Vagina (tissue), 2 donors: ENCODE measurements at regions of chr14 and their contacts with region 1.

Region 1: DNA sequence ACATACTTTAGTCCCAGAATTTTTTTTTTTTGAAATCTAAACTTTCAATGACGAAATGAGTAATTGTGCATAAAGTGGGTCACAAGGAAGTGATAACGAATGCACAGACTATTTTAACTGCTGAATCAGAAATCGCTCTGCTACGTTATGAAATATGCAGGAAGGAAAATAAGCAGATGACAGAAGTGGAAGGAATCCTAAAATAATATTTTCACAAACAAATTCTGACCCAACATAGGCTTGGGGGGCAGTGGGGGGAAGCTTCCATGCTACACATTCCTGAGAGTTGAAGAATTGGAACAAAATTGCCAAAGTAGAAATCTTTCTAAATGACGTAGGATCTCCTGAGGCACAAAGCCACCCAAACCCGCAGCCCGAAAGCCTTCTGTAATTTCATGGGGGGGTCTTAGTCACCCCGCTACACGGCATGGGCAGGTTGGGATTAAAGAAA is 89.6 kb downstream of the ARF6 start:
- DNase-seq: no peak
- H3K4me3 ChIP-seq: no peak overlapping the region
- H3K27ac ChIP-seq: no peak overlapping the region
- H3K4me1 ChIP-seq: peaks cover 9% of the 10 kb centered on the region
- H3K27me3 ChIP-seq: no peaks in the 10 kb centered on the region
- CTCF ChIP-seq: no peak
- POLR2A ChIP-seq: no peak

Region 2: GRCh38 chr14:49598485-49599300 is 383.8 kb before region 1 on chr14 and contains the start of gene LRR1:
- intact Hi-C with region 1: no loop called
- DNase-seq: peak in 1 of 2 donors; percentile 90
- H3K4me3 ChIP-seq: peak within 1 kb of the TSS; percentile 83 to 95
- H3K27ac ChIP-seq: peak within 1 kb of the TSS; percentile 94
- H3K4me1 ChIP-seq: peaks cover 13% of the 10 kb centered on the region
- H3K27me3 ChIP-seq: no peaks in the 10 kb centered on the region
- CTCF ChIP-seq: no peak
- POLR2A ChIP-seq: no peak
- total RNA-seq, gene LRR1: 3.7 TPM

Region 3: GRCh38 chr14:50038398-50039119 is 56.0 kb after region 1 on chr14:
- intact Hi-C with region 1: loop called (anchors 10 kb)
- DNase-seq: no peak
- H3K4me3 ChIP-seq: no peak overlapping the region
- H3K27ac ChIP-seq: peak overlapping the region; percentile 52
- H3K4me1 ChIP-seq: peaks cover 40% of the 10 kb centered on the region
- H3K27me3 ChIP-seq: no peaks in the 10 kb centered on the region
- CTCF ChIP-seq: no peak
- POLR2A ChIP-seq: no peak